OCI-LY7 (cell line): ENCODE measurements at regions of chr7 and their contacts with region 1.

Region 1: DNA sequence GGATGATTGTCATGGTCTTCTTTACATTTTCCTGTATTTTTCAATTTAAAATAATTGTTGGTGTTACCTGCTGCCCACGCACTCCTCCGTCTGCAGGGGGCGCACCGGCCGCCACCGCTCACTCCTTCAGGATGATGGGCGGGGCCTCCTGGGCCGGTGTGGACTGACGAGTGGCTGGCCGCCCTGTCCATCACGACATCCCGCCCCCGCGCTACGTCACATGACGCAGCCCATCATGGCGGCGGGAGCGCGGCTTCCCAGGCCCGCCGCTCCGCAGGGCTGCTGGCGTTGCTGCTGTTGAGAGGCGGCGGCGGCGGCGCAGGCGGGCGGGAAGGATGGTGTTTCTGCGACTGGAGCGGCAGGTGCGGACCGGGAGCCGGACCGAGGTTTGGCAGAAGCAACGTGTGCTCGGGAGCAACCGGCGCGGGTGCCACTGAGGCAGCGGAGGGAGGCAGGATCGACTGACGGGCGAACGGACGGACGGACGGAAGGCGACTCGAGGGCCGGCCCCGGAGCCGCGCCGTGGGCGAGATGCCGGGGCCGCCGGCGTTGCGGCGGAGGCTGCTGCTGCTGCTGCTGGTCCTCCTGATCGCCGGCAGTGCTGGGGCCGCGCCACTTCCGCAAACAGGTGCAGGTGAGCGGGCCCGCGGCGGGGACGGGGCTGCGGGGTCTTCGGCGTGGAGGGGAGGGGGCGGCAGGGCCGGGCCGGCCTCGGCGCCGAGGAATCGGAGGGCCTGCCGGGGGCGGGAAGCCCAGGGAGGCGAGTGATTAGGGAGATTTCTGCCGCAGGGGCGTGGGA is at the start of gene LMTK2:
- DNase-seq: peak; percentile 94
- H3K4me3 ChIP-seq: peak within 1 kb of the TSS; percentile 99
- H3K27ac ChIP-seq: peak within 1 kb of the TSS; percentile 53
- H3K4me1 ChIP-seq: peaks cover 14% of the 10 kb centered on the region
- CTCF ChIP-seq: peak; percentile 90
- total RNA-seq, gene LMTK2: 9.1 and 10.0 TPM in 2 replicates

Region 2: DNA sequence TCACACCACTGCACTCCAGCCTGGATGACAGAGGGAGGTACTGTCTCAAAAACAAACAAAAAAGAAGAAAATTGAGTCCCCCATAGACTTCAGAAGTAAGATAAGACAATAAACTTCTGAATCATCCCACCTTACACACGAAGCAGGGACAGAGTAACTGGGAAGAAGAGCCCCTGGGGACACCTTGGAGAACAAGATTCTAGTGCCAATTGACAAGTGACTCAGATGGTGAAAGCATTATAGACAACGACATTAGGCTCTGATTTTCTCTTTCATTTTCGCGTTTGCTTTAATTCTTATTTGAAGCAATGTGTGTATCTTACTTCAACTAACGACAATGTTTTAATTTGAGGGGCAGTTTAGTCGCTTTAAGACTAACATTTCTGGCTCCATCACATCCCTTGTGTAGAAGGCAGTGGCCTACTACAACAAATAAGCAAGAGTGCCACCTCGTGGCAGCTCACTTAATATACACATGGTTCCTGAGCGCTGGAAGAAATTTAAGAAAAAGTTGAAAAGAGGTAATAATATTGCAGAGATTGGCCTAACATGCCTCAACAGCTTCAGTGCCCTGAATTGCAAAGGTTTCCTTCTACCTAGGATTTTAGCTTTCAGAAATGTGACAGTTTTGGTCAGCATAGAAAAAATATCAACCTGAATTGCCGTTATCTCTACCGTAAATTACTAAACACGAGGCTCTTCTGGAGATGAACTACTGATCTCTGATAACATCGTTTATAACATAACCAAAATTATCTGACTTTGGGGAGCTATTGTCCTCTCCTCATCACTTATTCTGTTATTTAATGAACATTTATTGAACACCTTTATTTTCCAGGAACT is 271.3 kb before region 1 on chr7:
- CTCF ChIA-PET with region 1: no interaction called
- POLR2A ChIA-PET with region 1: no interaction called
- intact Hi-C with region 1: no loop called
- DNase-seq: peak; percentile 71
- H3K4me3 ChIP-seq: no peak overlapping the region
- H3K27ac ChIP-seq: no peak overlapping the region
- H3K4me1 ChIP-seq: no peaks in the 10 kb centered on the region
- CTCF ChIP-seq: peak; percentile 89

Region 3: DNA sequence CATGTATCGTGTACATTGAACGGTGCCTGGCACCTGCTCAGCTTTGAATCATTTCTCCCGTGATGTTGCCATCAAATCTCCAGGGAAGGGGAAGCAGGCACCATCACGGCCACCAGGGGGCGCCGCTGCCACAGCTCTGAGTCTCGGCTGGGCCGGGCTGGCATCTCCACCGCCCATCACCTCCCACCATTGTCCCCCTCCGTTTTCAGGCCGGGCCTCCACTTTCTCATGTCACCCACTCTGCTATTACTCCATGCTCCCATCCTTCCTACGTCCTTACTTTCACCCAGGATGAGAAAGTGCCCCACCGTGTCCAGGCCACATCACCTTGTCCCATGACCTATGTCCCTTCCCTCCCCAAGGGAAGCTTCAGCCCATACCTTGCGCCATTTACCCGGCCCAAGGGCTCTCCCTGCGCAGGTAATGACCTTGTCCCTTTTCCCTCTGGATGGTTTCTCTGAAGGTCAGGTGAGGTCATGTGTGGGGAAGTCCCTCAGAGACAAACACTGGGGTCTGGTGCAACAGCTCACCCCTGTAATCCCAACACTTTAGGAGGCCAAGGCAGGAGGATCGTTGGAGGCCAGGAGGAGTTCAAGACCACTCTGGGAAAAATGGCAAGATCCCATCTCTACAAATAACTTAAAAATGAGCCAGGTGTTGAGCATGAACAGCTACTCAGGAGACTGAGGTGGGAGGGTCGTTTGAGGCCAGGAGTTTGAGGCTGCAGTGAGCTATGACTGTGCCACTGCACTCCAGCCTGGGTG is 85.1 kb before region 1 on chr7:
- CTCF ChIA-PET with region 1: interaction called, 3 read pairs
- POLR2A ChIA-PET with region 1: no interaction called
- intact Hi-C with region 1: loop called (anchors 5 kb)
- DNase-seq: peak; percentile 73
- H3K4me3 ChIP-seq: no peak overlapping the region
- H3K27ac ChIP-seq: no peak overlapping the region
- H3K4me1 ChIP-seq: no peaks in the 10 kb centered on the region
- CTCF ChIP-seq: peak; percentile 94

Region 4: GRCh38 chr7:98119256-98119918 is 12.5 kb after region 1 on chr7:
- CTCF ChIA-PET with region 1: no interaction called
- POLR2A ChIA-PET with region 1: interaction called, 13 read pairs
- intact Hi-C with region 1: no loop called
- DNase-seq: no peak
- H3K4me3 ChIP-seq: no peak overlapping the region
- H3K27ac ChIP-seq: no peak overlapping the region
- H3K4me1 ChIP-seq: no peaks in the 10 kb centered on the region
- CTCF ChIP-seq: no peak

Region 5: GRCh38 chr7:98157761-98158160 is 50.9 kb after region 1 on chr7:
- CTCF ChIA-PET with region 1: no interaction called
- POLR2A ChIA-PET with region 1: no interaction called
- intact Hi-C with region 1: no loop called
- DNase-seq: no peak
- H3K4me3 ChIP-seq: no peak overlapping the region
- H3K27ac ChIP-seq: no peak overlapping the region
- H3K4me1 ChIP-seq: peaks cover 2% of the 10 kb centered on the region
- CTCF ChIP-seq: no peak

Region 6: DNA sequence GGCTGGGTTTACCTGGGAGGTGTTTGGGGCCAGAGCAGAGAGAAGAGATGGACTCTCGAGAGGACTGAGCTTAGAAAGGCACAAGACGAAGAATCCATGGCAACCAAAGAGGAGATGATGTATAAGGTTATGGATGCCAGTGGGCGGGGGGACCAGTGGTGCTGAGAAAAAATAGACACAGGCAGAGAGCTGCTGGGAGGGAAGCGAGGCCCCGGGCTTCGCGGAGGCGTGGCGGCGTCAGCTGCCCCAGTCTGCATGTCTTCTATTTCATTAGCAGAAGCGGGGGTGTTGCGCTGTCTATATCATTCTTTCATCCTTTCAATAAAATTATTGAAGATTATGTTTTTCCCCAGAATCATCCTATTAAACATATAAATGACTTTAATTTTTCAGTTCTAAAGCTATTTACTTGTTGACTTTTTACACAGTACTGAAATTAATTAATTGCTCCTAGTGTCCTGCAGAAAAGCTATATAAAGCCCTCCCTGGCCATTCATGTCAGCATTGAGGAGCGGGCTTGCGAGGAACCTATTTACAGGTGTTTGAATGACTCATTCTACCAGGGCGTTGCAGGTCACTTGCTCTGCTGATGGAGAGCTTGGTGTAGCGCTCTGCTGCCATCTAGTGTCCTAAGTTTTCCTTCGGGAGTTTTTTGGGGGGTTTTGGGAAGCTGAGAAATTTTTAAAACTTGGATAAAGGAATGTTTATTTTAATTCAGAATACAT is 61.5 kb after region 1 on chr7:
- CTCF ChIA-PET with region 1: interaction called, 6 read pairs
- POLR2A ChIA-PET with region 1: interaction called, 5 read pairs
- intact Hi-C with region 1: loop called (anchors 1 kb)
- DNase-seq: peak; percentile 64
- H3K4me3 ChIP-seq: no peak overlapping the region
- H3K27ac ChIP-seq: no peak overlapping the region
- H3K4me1 ChIP-seq: no peaks in the 10 kb centered on the region
- CTCF ChIP-seq: peak; percentile 86

Region 7: DNA sequence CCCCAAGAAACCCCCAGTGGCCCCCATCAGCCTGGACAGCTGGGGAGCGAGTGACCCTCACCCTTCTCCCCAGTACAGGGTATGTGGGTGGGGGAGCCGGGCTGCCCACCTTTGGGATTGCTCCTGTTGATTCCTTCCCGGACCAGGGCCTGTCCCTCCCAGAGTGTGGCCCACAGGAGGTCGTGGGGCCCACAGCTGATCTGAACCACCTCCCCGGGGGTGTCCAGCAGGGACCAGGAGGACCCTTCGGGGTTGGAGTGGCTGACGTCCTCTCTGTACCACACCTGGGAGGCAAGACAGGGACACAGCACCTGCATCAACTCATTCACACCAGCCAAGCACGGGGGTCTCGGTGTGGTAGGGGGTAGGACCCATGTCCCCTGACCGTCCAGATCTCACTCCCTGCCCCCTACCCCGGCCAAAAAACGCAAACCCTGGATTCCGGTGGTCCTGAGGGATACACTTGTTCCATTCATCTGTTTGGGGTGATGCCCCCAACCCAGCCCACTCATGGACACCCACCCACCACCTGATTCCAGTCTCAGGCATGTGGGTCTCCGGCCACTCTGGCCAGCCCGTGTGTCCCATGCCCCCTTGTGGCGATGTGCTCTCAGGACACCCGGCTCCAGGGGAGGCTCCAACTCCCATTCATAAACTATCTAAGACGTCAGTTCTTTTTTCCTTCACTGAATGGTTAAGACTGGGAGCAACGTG is 134.3 kb after region 1 on chr7:
- CTCF ChIA-PET with region 1: no interaction called
- POLR2A ChIA-PET with region 1: no interaction called
- intact Hi-C with region 1: loop called (anchors 1 kb)
- DNase-seq: peak; percentile 66
- H3K4me3 ChIP-seq: no peak overlapping the region
- H3K27ac ChIP-seq: no peak overlapping the region
- H3K4me1 ChIP-seq: no peaks in the 10 kb centered on the region
- CTCF ChIP-seq: peak; percentile 82

Region 8: GRCh38 chr7:98280791-98281756 is 174.2 kb after region 1 on chr7 and contains the start of gene BRI3:
- CTCF ChIA-PET with region 1: no interaction called
- POLR2A ChIA-PET with region 1: no interaction called
- intact Hi-C with region 1: loop called (anchors 5 kb)
- DNase-seq: peak; percentile 93
- H3K4me3 ChIP-seq: peak within 1 kb of the TSS; percentile 77
- H3K27ac ChIP-seq: peak within 1 kb of the TSS; percentile 57
- H3K4me1 ChIP-seq: peaks cover 21% of the 10 kb centered on the region
- CTCF ChIP-seq: no peak
- total RNA-seq, gene BRI3: 18.0 and 18.4 TPM in 2 replicates